CD4-positive, alpha-beta T cell (primary cell): ENCODE measurements at regions of chr13 and their contacts with region 1.

Region 1: DNA sequence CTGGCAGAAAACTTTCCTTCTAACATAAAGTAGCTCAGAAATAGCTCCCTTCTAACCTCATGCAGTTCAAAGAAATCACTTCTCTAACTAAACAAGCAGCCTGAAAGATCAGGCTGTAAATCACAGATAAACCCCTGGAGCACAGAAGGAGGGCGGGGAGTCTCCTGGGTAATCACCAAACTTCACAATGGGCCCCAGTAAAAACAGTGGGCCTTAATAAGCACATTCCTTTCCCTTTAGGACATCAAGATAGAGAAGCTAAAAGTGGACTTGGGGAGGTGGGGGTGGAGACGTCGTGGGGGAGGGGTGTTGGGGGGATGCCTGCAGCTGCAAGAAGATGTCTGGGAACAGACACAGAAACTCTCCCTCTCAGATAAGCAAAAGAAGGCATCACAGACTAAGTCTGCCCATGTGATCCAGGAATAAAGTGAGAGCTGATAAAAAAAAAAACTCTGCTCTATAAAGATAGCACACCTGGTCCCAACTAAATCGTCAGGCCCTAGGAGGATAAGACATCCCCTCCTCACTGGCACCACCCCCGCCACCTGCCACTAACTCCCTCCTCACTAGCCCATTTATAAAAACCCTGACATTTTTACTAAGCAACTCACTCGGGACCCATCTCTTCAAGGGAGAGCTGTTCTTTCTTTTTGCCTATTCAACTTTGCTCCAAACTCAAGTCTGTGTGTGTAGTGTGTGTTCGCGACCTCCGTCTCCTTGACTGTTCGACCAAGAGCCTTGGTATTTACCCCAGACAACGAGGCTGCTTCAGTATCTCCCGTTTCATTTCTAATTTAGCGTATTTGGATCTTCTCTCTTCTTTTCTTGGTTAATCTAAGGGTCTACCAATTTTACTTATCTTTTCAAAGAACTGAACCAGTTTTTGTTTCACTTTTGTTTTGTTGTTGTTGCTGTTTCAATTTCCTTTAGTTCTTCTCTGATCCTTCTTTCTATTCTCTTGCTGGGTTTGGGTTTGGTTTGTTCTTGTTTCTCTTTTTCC is 31.7 kb downstream of the DNAJC15 start:
- DNase-seq: peak in 7 of 14 experiments; percentile 10 to 69 (median 34)
- ATAC-seq: peak; percentile 46
- H3K4me3 ChIP-seq: peak overlapping the region; percentile 69
- H3K4me3 Mint-ChIP-seq: no peak overlapping the region
- H3K27ac ChIP-seq: peak overlapping the region; percentile 81 to 84
- H3K27ac Mint-ChIP-seq: no peak overlapping the region
- H3K4me1 ChIP-seq: peaks cover 26% of the 10 kb centered on the region
- H3K4me1 Mint-ChIP-seq: peaks cover 5% of the 10 kb centered on the region
- H3K27me3 ChIP-seq: no peaks in the 10 kb centered on the region
- H3K27me3 Mint-ChIP-seq: no peaks in the 10 kb centered on the region
- CTCF ChIP-seq: no peak

Region 2: DNA sequence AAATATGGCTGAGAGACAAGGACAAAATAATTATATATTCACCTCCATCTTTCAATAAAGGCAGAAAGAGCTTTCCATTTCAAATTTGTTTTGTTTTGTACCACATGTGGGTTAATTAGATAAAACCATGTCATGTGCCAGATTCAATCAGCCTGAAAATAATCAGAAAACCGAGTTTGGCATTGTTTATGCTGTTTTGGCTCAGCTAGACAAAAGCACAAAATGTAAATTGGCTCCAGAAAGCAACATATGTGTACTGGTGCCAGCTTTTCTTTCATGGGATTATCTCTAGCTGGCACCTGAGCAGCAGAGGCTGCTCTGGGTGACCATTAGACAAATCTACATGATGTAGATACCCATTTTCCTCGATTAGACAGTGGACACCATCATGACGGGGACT is 40.9 kb before region 1 on chr13:
- CTCF ChIA-PET with region 1: no interaction called
- POLR2A ChIA-PET with region 1: no interaction called
- intact Hi-C with region 1: no loop called
- DNase-seq: no peak
- ATAC-seq: no peak
- H3K4me3 ChIP-seq: no peak overlapping the region
- H3K4me3 Mint-ChIP-seq: no peak overlapping the region
- H3K27ac ChIP-seq: no peak overlapping the region
- H3K27ac Mint-ChIP-seq: no peak overlapping the region
- H3K4me1 ChIP-seq: no peaks in the 10 kb centered on the region
- H3K4me1 Mint-ChIP-seq: no peaks in the 10 kb centered on the region
- H3K27me3 ChIP-seq: no peaks in the 10 kb centered on the region
- H3K27me3 Mint-ChIP-seq: no peaks in the 10 kb centered on the region
- CTCF ChIP-seq: no peak

Region 3: GRCh38 chr13:43041369-43041921 is 13.7 kb before region 1 on chr13:
- CTCF ChIA-PET with region 1: no interaction called
- POLR2A ChIA-PET with region 1: interaction called, 11 read pairs
- intact Hi-C with region 1: loop called in 1 of 2 experiments (anchors 1 kb)
- DNase-seq: no peak
- ATAC-seq: no peak
- H3K4me3 ChIP-seq: no peak overlapping the region
- H3K4me3 Mint-ChIP-seq: no peak overlapping the region
- H3K27ac ChIP-seq: no peak overlapping the region
- H3K27ac Mint-ChIP-seq: peak overlapping the region; percentile 94
- H3K4me1 ChIP-seq: peaks cover 14% of the 10 kb centered on the region
- H3K4me1 Mint-ChIP-seq: peaks cover 79% of the 10 kb centered on the region
- H3K27me3 ChIP-seq: no peaks in the 10 kb centered on the region
- H3K27me3 Mint-ChIP-seq: no peaks in the 10 kb centered on the region
- CTCF ChIP-seq: no peak